PC-3 (cell line): ENCODE measurements at regions of chr4 and their contacts with region 1.

Region 1: GRCh38 chr4:110361921-110362320 is 114.0 kb upstream of the ENPEP start:
- DNase-seq: peak; percentile 85
- ATAC-seq: peak; percentile 76
- H3K4me3 ChIP-seq: peak overlapping the region; percentile 37; the same call in 1 of the 2 replicates
- H3K27ac ChIP-seq: peak overlapping the region; percentile 61
- H3K4me1 ChIP-seq: peaks cover 26% of the 10 kb centered on the region
- H3K27me3 ChIP-seq: no peaks in the 10 kb centered on the region; the same call in 1 of the 2 replicates
- CTCF ChIP-seq: no peak

Region 2: DNA sequence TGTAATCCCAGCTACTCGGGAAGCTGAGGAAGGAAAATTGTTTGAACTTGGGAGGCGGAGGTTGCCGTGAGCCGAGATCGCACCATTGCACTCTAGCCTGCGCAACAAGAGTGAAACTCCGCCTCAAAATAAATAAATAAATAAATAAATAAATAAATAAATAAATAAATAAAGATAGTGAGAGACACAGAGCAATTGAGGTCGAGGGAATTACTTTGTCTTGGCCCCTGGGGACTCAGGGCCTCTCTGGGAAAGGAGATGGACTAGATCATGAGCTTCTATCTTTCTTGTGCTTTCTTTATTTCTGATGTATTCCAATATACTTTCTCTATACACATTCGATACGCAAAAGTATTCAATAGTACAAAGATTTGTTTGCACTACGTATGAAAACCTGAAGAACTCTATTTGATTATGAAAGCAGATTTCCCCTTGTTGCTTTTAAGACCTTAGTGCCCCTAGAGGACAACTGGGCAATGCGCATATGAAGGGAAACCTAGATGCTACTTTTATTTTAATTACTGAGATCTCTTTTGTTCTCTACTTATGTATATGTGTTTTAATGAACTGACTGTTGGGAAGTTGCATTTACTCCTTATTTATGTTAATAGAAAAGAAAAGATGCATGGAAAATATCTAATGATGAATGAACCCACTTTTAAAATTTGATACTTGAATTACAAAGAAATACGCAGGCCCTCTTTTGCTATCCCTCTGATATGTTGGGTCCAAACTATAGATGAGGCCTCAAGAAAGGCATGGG is 150.7 kb before region 1 on chr4:
- CTCF ChIA-PET with region 1: no interaction called
- POLR2A ChIA-PET with region 1: no interaction called
- intact Hi-C with region 1: no loop called
- DNase-seq: peak; percentile 51
- ATAC-seq: 0 out of 2 replicates have a peak, but pooled peaks have one; percentile 35
- H3K4me3 ChIP-seq: no peak overlapping the region
- H3K27ac ChIP-seq: no peak overlapping the region
- H3K4me1 ChIP-seq: no peaks in the 10 kb centered on the region; the same call in 1 of the 2 replicates
- H3K27me3 ChIP-seq: no peaks in the 10 kb centered on the region
- CTCF ChIP-seq: peak; percentile 80

Region 3: GRCh38 chr4:110663738-110664444 is 302.0 kb after region 1 on chr4:
- CTCF ChIA-PET with region 1: no interaction called
- POLR2A ChIA-PET with region 1: interaction called, 24 read pairs
- intact Hi-C with region 1: no loop called
- DNase-seq: peak; percentile 76
- ATAC-seq: peak; percentile 86
- H3K4me3 ChIP-seq: no peak overlapping the region
- H3K27ac ChIP-seq: peak overlapping the region; percentile 70
- H3K4me1 ChIP-seq: peaks cover 20% of the 10 kb centered on the region
- H3K27me3 ChIP-seq: no peaks in the 10 kb centered on the region
- CTCF ChIP-seq: no peak